K562 (cell line): ENCODE measurements at regions of chr11 and their contacts with region 1.

Region 1: GRCh38 chr11:57260937-57261783 is 24.1 kb upstream of the APLNR start:
- DNase-seq: no peak
- ATAC-seq: no peak
- H3K4me3 ChIP-seq: no peak overlapping the region
- H3K27ac ChIP-seq: no peak overlapping the region
- H3K4me1 ChIP-seq: no peaks in the 10 kb centered on the region
- H3K27me3 ChIP-seq: no peaks in the 10 kb centered on the region
- CTCF ChIP-seq: no peak
- EP300 ChIP-seq: no peak
- POLR2A ChIP-seq: no peak
- RAD21 ChIP-seq: no peak

Region 2: DNA sequence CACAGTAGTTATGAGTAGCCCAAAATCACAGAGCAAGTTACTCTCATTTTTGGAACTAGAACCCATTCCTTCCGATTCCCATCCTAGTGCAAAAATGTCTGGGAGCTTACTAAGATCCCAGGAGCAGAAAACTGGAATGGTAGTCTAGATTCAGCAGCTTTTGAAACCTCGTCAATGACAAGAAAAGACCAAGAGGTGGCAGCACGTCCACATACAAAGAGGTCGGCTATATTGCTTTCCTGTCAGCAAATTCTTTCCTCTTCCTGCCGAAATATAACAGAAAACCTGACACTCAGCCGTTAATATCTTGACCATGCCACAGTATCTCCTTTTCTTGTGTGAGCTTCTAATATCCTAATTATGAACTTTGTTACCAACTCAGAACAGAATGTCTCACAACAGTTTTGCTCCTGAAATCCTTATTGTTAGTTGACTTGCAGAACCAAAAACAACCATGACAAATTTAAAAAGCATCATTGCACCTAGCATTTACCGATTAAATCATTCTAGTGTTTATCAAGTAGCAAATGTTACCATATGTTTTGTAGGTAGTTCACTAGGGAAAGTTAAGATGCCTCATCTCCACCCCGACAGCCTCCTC is 419.9 kb before region 1 on chr11:
- CTCF ChIA-PET with region 1: no interaction called
- POLR2A ChIA-PET with region 1: no interaction called
- in situ Hi-C with region 1: loop called (anchors 5 kb)
- intact Hi-C with region 1: no loop called
- DNase-seq: peak; percentile 38 to 61 (median 52)
- ATAC-seq: peak; percentile 68
- H3K4me3 ChIP-seq: no peak overlapping the region
- H3K27ac ChIP-seq: no peak overlapping the region
- H3K4me1 ChIP-seq: no peaks in the 10 kb centered on the region
- H3K27me3 ChIP-seq: no peaks in the 10 kb centered on the region
- CTCF ChIP-seq: peak; percentile 56 to 71 (median 62)
- EP300 ChIP-seq: no peak
- POLR2A ChIP-seq: no peak
- RAD21 ChIP-seq: peak; percentile 74

Region 3: GRCh38 chr11:57303280-57303989 is 42.3 kb after region 1 on chr11:
- CTCF ChIA-PET with region 1: no interaction called
- POLR2A ChIA-PET with region 1: no interaction called
- in situ Hi-C with region 1: no loop called
- intact Hi-C with region 1: no loop called
- DNase-seq: no peak
- ATAC-seq: peak; percentile 15; the same call in 1 of the 3 replicates
- H3K4me3 ChIP-seq: no peak overlapping the region
- H3K27ac ChIP-seq: no peak overlapping the region
- H3K4me1 ChIP-seq: peaks cover 7 to 18% of the 10 kb centered on the region in 2 experiments; a peak in 4 of 5 replicates
- H3K27me3 ChIP-seq: no peaks in the 10 kb centered on the region
- CTCF ChIP-seq: no peak
- EP300 ChIP-seq: no peak
- POLR2A ChIP-seq: no peak
- RAD21 ChIP-seq: no peak

Region 4: DNA sequence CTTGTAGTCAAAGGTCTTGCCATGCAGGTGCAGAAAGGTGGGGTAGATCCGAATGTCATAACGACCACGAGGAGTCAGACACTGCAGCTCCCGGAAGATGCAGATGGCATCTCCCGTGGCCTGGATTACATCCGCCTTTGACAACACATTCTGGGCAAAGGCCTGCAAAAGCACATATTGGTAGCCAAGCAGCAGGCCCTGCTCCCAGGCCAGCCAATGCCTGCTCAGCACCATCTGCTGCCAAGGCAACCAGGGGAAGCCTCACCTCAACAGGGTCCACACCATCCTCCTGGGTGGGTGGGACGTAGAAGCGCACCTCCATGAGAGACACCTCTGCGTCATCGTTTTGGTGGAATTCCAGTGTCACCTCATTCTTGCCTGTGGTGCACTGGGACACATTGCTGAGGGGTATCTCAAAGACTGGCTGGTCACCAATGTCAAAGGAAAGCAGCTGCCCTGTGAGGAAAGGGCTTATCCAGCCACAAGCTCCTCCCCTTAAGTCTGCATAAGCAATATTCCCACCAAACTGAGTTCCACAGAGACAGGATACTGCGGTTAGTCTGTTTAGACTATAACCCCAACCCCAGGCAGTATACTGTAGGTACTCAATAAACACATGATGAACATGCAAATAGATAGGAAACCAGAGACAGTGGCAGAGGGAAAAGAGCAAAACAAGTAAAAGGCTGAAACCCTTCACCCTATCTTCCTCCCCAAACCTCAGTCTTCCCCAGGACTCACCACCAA is 71.7 kb after region 1 on chr11:
- CTCF ChIA-PET with region 1: no interaction called
- POLR2A ChIA-PET with region 1: no interaction called
- in situ Hi-C with region 1: no loop called
- intact Hi-C with region 1: no loop called
- DNase-seq: no peak
- ATAC-seq: no peak
- H3K4me3 ChIP-seq: no peak overlapping the region
- H3K27ac ChIP-seq: no peak overlapping the region
- H3K4me1 ChIP-seq: peaks cover 10 to 19% of the 10 kb centered on the region in 2 experiments; a peak in 4 of 5 replicates
- H3K27me3 ChIP-seq: no peaks in the 10 kb centered on the region
- CTCF ChIP-seq: no peak
- EP300 ChIP-seq: no peak
- POLR2A ChIP-seq: no peak
- RAD21 ChIP-seq: no peak